ENCODE measurements at regions of chr16 and their contacts with region 1.

Region 1: GRCh38 chr16:12416131-12416839 is 387.4 kb downstream of the CPPED1 start:
- DNase-seq: peak; percentile 7 to 79 (median 77)
- H3K4me3 ChIP-seq: no peak overlapping the region
- H3K4me3 Mint-ChIP-seq: no peak overlapping the region
- H3K27ac ChIP-seq: peak overlapping the region in 1 of 2 donors; percentile 25
- H3K27ac Mint-ChIP-seq: peak overlapping the region; percentile 19 to 99 (median 95)
- H3K4me1 ChIP-seq: peaks cover 0 to 13% of the 10 kb centered on the region in 2 donors
- H3K4me1 Mint-ChIP-seq: peaks cover 24% of the 10 kb centered on the region
- H3K27me3 ChIP-seq: no peaks in the 10 kb centered on the region
- H3K27me3 Mint-ChIP-seq: peaks cover 0 to 4% (median 0%) of the 10 kb centered on the region in 3 donors
- CTCF ChIP-seq: no peak

Region 2: GRCh38 chr16:12330946-12331345 is 85.3 kb before region 1 on chr16:
- intact Hi-C with region 1: loop called in 1 of 2 experiments (anchors 10 kb)
- DNase-seq: no peak
- H3K4me3 ChIP-seq: no peak overlapping the region
- H3K4me3 Mint-ChIP-seq: no peak overlapping the region
- H3K27ac ChIP-seq: no peak overlapping the region
- H3K27ac Mint-ChIP-seq: no peak overlapping the region
- H3K4me1 ChIP-seq: no peaks in the 10 kb centered on the region
- H3K4me1 Mint-ChIP-seq: no peaks in the 10 kb centered on the region
- H3K27me3 ChIP-seq: no peaks in the 10 kb centered on the region
- H3K27me3 Mint-ChIP-seq: peaks cover 0 to 2% (median 1%) of the 10 kb centered on the region in 3 donors
- CTCF ChIP-seq: no peak